ENCODE measurements at regions of chr2 and their contacts with region 1.

Region 1: GRCh38 chr2:159185401-159186130 is 100.9 kb downstream of the WDSUB1 start:
- DNase-seq: peak; percentile 57 to 70 (median 64)
- ATAC-seq: peak; percentile 88
- H3K4me3 ChIP-seq: no peak overlapping the region
- H3K27ac ChIP-seq: no peak overlapping the region
- H3K4me1 ChIP-seq: no peaks in the 10 kb centered on the region
- H3K27me3 ChIP-seq: peaks cover 35 to 63% of the 10 kb centered on the region in 2 experiments
- CTCF ChIP-seq: peak; percentile 67 to 84 (median 84)
- EP300 ChIP-seq: no peak
- POLR2A ChIP-seq: no peak
- RAD21 ChIP-seq: peak; percentile 91 to 94

Region 2: DNA sequence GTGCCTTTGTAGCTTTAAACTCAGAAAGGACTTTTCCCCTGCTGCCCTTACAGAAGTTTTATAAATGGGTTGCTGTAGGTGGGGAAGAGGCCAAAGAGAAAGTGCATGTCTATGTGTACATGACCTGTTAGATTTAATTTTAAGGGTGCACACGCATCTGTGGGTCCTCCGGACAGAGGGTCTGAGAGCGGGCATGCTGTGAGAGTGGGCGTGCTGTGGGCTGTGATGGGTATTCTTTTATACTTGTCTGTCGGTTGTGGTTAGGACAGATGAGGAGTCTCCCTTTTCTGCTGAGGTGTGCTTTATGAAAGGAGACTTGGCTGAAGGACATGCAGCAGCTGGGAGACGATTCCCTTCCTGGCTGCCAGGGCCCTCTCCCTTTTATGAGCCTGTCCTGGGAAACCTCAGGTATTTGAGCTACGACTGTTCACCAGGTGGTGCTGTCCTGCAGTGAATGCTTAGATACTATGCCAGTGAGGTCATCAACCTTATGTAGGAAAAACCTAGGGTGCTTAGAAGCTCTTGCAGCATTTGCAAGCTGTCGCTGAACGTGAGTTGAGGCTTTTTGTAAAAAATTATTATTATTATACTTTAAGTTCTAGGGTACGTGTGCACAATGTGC is 149.7 kb before region 1 on chr2:
- CTCF ChIA-PET with region 1: interaction called, 11 read pairs
- POLR2A ChIA-PET with region 1: interaction called, 3 read pairs
- in situ Hi-C with region 1: no loop called
- intact Hi-C with region 1: loop called (anchors 1 kb)
- DNase-seq: peak; percentile 24 to 51 (median 34)
- ATAC-seq: peak; percentile 90
- H3K4me3 ChIP-seq: no peak overlapping the region
- H3K27ac ChIP-seq: no peak overlapping the region
- H3K4me1 ChIP-seq: peaks cover 4 to 5% of the 10 kb centered on the region in 2 experiments; a peak in 4 of 5 replicates
- H3K27me3 ChIP-seq: peaks cover 8 to 17% of the 10 kb centered on the region in 2 experiments; a peak in 4 of 5 replicates
- CTCF ChIP-seq: peak; percentile 50 to 71 (median 60)
- EP300 ChIP-seq: no peak
- POLR2A ChIP-seq: no peak
- RAD21 ChIP-seq: peak; percentile 71 to 85

Region 3: GRCh38 chr2:159118115-159118858 is 67.3 kb before region 1 on chr2:
- CTCF ChIA-PET with region 1: no interaction called
- POLR2A ChIA-PET with region 1: no interaction called
- in situ Hi-C with region 1: no loop called
- intact Hi-C with region 1: loop called (anchors 2 kb)
- DNase-seq: peak; percentile 67 to 89 (median 76)
- ATAC-seq: peak; percentile 97
- H3K4me3 ChIP-seq: no peak overlapping the region
- H3K27ac ChIP-seq: no peak overlapping the region
- H3K4me1 ChIP-seq: peaks cover 5 to 9% of the 10 kb centered on the region in 2 experiments; a peak in 4 of 5 replicates
- H3K27me3 ChIP-seq: peaks cover 3 to 6% of the 10 kb centered on the region in 2 experiments; a peak in 4 of 5 replicates
- CTCF ChIP-seq: peak; percentile 85 to 94 (median 94)
- EP300 ChIP-seq: no peak
- POLR2A ChIP-seq: no peak
- RAD21 ChIP-seq: peak; percentile 96 to 98